ENCODE measurements at regions of chr1 and their contacts with region 1.

Region 1: DNA sequence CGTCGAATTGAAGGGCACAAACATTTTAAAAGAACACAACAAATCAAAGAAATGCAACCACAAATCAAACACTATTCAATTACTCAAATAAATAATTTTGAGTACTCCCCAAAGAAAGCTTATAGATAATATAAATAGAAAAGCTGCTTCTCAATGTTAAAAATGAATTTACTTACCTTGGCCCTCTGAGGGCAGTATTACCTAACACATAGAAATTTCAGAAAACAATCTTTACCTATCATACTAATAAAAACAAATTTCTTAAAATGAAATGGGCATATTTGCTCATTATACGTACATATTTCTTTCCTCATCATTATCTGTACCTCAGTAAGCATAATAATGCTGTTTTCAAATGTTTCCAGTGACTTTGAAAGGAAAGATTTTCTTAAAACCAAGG is 141.8 kb downstream of the AKT3 start:
- DNase-seq: peak in 5 of 9 donors; percentile 4 to 36 (median 15)
- ATAC-seq: no peak
- H3K4me3 ChIP-seq: no peak overlapping the region
- H3K4me3 Mint-ChIP-seq: no peak overlapping the region
- H3K27ac ChIP-seq: no peak overlapping the region
- H3K27ac Mint-ChIP-seq: no peak overlapping the region
- H3K4me1 ChIP-seq: no peaks in the 10 kb centered on the region
- H3K4me1 Mint-ChIP-seq: peaks cover 5 to 40% (median 27%) of the 10 kb centered on the region in 7 donors
- H3K27me3 ChIP-seq: no peaks in the 10 kb centered on the region
- H3K27me3 Mint-ChIP-seq: no peaks in the 10 kb centered on the region

Region 2: DNA sequence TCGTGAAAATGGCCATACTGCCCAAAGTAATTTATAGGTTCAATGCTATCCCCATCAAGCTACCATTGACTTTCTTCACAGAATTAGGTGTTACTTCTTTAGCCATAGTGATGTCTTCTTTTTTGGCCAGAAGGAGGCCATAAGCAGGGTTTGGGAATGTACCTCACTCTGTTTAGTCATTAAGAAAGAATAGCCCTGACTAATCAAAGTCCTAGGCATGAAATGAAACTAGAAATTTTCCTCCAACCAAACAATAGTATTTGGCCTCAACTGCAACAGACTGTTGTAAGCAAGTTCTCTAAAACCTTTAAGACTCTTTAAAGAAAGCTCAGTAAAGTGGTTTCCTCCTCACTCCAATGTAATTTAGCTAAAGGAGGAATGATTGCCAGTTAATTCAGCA is 22.1 kb before region 1 on chr1:
- CTCF ChIA-PET with region 1: no interaction called
- POLR2A ChIA-PET with region 1: no interaction called
- intact Hi-C with region 1: loop called in 1 of 2 experiments (anchors 2 kb)
- DNase-seq: no peak
- ATAC-seq: no peak
- H3K4me3 ChIP-seq: no peak overlapping the region
- H3K4me3 Mint-ChIP-seq: no peak overlapping the region
- H3K27ac ChIP-seq: no peak overlapping the region
- H3K27ac Mint-ChIP-seq: peak overlapping the region in 1 of 9 donors; percentile 43
- H3K4me1 ChIP-seq: no peaks in the 10 kb centered on the region
- H3K4me1 Mint-ChIP-seq: peaks cover 0 to 19% (median 4%) of the 10 kb centered on the region in 7 donors
- H3K27me3 ChIP-seq: no peaks in the 10 kb centered on the region
- H3K27me3 Mint-ChIP-seq: no peaks in the 10 kb centered on the region

Region 3: DNA sequence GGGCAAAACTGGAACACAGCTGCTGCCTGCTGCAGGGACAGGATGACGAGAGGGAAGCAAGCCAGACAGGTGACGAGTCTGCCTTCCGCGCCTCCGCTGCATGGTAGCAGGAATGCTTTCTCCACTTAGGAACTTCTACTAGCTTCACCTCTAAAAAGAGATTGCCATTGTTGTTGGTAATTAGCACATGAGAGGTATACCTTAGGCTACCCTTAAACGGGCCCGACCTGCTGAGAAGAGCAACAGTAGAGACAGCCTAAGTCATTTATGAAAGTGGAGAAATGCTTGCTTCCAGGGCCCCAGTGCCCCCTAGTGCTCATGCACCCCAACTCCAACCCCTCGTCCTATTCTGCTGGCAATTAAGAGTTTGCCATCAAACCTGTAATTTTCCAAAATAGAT is 238.7 kb after region 1 on chr1:
- CTCF ChIA-PET with region 1: no interaction called
- POLR2A ChIA-PET with region 1: no interaction called
- intact Hi-C with region 1: loop called (anchors 1 kb)
- DNase-seq: peak in 6 of 9 donors; percentile 11 to 52 (median 38)
- ATAC-seq: peak; percentile 76
- H3K4me3 ChIP-seq: no peak overlapping the region
- H3K4me3 Mint-ChIP-seq: no peak overlapping the region
- H3K27ac ChIP-seq: no peak overlapping the region
- H3K27ac Mint-ChIP-seq: peak overlapping the region in 1 of 9 donors; percentile 17
- H3K4me1 ChIP-seq: no peaks in the 10 kb centered on the region
- H3K4me1 Mint-ChIP-seq: no peaks in the 10 kb centered on the region
- H3K27me3 ChIP-seq: no peaks in the 10 kb centered on the region
- H3K27me3 Mint-ChIP-seq: peaks cover 0 to 8% (median 5%) of the 10 kb centered on the region in 5 donors

Measured in naive thymus-derived CD4-positive, alpha-beta T cell (primary cell).